ENCODE measurements at regions of chr16 and their contacts with region 1.

Region 1: DNA sequence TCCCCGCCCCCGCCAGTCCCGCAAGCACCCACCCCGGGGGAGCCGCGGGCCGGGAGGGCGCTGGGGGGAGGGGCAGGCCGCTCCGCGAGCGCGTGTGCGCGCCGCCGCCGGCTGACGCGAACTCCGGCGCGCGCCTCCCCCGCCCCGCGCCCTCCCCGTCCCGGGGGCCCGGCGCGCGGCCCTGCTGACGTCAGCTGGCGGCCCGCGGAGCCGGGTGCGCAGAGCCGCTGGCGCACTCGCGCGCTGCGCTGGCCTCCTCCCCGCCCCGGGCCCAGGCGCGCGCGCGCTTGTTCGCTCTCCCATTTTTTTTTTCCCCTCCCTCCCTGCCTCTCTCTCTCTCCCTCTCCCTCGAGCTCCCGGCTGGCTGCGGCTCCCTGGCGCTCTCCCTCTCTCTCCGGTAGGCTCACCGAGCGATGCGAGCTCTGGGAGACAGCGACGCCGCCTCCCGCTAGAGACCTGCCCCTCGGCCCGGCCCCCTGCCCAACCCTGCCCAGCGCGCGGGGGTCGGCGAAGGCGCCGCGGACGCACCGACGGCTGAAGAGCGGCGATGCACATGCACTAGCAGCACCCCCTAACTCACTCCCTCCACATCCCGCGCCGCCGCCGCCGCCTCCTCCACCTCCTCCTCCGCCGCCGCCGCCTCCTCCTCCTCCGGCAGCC is at the start of gene GNAO1:
- DNase-seq: peak; percentile 91
- H3K4me3 ChIP-seq: peak within 1 kb of the TSS; percentile 81 to 82 (median 81)
- H3K27ac ChIP-seq: peak within 1 kb of the TSS; percentile 76 to 99 (median 97)
- H3K4me1 ChIP-seq: peaks cover 0 to 49% (median 39%) of the 10 kb centered on the region in 4 donors
- H3K27me3 ChIP-seq: no peaks in the 10 kb centered on the region
- CTCF ChIP-seq: no peak
- EP300 ChIP-seq: no peak
- POLR2A ChIP-seq: no peak
- total RNA-seq, gene GNAO1: 28.8 to 67.0 (median 32.4) TPM

Region 2: GRCh38 chr16:55949518-55949917 is 241.8 kb before region 1 on chr16:
- intact Hi-C with region 1: loop called (anchors 5 kb)
- DNase-seq: no peak
- H3K4me3 ChIP-seq: no peak overlapping the region
- H3K27ac ChIP-seq: no peak overlapping the region
- H3K4me1 ChIP-seq: peaks cover 0 to 19% (median 3%) of the 10 kb centered on the region in 4 donors
- H3K27me3 ChIP-seq: no peaks in the 10 kb centered on the region
- CTCF ChIP-seq: no peak
- EP300 ChIP-seq: peak in 1 of 4 donors; percentile 10
- POLR2A ChIP-seq: no peak

Region 3: DNA sequence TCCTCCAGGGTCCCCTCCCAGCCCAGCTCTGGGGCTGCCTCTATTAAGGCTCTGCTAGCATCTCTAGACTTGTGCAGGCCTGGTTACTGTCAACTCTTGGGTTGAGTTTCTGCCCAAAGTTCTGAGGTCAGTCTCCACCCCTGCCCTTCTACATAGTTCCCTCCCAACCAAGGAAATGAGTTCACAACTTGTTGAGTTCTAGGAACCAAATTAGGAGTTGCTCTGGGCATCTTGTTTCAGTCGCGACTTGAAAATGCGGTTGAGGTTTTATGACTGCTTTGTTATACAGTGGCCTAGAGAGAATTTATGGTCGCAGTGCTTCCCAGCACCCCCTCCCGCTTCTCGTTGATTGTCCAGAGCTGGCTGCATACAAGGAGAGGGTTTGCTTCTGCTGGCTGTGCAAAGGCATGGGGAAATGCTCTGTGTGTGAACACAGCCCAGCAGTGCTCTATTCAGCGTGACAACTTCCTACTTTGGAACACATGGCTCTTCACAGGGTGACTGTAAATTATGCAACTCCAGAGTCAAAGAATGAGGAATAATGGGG is 20.2 kb after region 1 on chr16:
- intact Hi-C with region 1: loop called (anchors 2 kb)
- DNase-seq: peak; percentile 94
- H3K4me3 ChIP-seq: peak overlapping the region in 3 of 4 donors; percentile 0 to 28 (median 20)
- H3K27ac ChIP-seq: peak overlapping the region in 3 of 4 donors; percentile 72 to 86 (median 83)
- H3K4me1 ChIP-seq: peaks cover 0 to 73% (median 43%) of the 10 kb centered on the region in 4 donors
- H3K27me3 ChIP-seq: no peaks in the 10 kb centered on the region
- CTCF ChIP-seq: no peak
- EP300 ChIP-seq: peak; percentile 45 to 81 (median 78)
- POLR2A ChIP-seq: peak in 1 of 2 donors; percentile 26

Region 4: GRCh38 chr16:56257239-56257638 is 66.0 kb after region 1 on chr16:
- intact Hi-C with region 1: loop called (anchors 5 kb)
- DNase-seq: peak; percentile 97
- H3K4me3 ChIP-seq: no peak overlapping the region
- H3K27ac ChIP-seq: peak overlapping the region in 3 of 4 donors; percentile 82 to 91 (median 90)
- H3K4me1 ChIP-seq: peaks cover 5 to 100% (median 78%) of the 10 kb centered on the region in 4 donors
- H3K27me3 ChIP-seq: no peaks in the 10 kb centered on the region
- CTCF ChIP-seq: no peak
- EP300 ChIP-seq: peak in 1 of 4 donors; percentile 47
- POLR2A ChIP-seq: no peak

Region 5: DNA sequence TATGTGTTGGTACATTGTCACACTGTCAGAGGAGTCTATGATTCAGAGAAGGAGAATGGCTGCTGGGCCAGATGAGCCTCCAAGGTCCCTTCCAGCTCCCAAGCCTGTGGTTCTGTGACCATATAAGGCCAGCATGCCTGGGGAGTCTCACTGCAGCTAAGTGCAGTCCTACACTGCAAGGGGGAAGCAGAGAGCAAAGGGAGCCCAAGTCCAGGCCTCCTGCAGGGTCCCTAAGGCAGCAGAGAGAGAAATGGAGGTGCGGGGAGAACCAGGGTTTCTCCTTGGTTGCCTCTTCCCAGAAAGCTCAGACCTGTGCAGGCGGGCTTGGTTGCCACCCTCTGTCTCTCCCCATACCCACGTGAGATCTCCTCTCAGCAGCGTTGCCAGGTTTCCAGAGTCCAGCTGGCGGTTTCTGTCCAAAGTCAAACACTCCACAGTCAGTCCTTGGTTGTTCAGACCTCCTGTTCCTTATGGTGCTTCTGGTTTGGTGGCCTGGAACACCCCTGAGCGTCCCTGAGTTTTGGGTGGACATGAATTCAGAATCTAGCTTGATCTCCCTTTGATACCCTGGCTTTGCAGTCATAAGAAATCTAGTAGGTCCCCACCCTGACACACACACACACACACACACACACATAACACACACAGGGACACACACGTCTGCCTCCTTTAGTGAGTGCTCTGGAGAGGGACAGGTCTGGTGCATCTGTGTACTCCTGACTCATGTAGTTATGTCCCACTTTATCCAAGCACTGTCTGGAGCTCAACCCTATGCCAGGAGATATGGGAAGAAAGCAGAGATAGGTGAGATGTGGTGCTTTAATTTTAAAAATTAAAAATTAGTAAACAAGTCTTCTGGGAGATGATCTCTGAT is 78.8 kb after region 1 on chr16:
- intact Hi-C with region 1: loop called (anchors 2 kb)
- DNase-seq: peak; percentile 93
- H3K4me3 ChIP-seq: peak overlapping the region in 2 of 4 donors; percentile 45 to 46
- H3K27ac ChIP-seq: peak overlapping the region in 3 of 4 donors; percentile 90 to 92 (median 91)
- H3K4me1 ChIP-seq: peaks cover 6 to 48% (median 45%) of the 10 kb centered on the region in 4 donors
- H3K27me3 ChIP-seq: no peaks in the 10 kb centered on the region
- CTCF ChIP-seq: peak in 3 of 4 experiments; percentile 19 to 56 (median 26)
- EP300 ChIP-seq: peak in 1 of 4 donors; percentile 9
- POLR2A ChIP-seq: no peak

Region 6: DNA sequence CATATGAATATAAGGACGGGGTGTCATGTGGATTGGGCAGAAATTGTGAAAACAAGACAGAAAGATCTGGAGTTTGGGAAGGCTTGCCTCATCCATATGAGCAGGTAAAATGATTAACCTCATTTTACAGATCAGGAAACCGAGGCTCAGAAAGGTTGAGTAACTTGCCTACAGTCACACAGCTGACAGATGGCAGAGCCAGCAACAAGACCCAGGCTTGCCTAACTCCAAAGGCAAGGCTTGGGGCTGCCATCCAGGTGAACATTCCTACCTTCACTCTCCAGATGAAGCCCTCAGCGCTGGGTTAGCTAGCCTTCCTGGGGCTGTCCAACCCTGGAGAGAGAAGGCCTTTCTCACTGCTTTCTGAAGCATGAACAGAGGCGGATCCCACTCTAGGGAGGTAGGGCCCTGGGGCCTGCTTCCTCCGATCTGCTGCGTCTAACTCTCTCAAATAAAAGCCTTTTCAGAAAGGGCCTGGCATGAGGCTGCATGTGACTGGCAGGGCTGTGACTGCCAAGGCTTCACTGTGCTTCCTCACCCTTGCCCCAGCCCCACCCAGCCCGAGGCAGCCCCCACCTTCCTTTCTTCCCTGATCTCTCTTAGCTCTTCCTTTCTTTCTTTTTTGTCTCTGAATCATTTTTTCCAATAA is 107.8 kb after region 1 on chr16:
- intact Hi-C with region 1: loop called (anchors 5 kb)
- DNase-seq: peak; percentile 76
- H3K4me3 ChIP-seq: no peak overlapping the region
- H3K27ac ChIP-seq: peak overlapping the region in 3 of 4 donors; percentile 33 to 49 (median 46)
- H3K4me1 ChIP-seq: peaks cover 0 to 72% (median 54%) of the 10 kb centered on the region in 4 donors
- H3K27me3 ChIP-seq: no peaks in the 10 kb centered on the region
- CTCF ChIP-seq: no peak
- EP300 ChIP-seq: no peak
- POLR2A ChIP-seq: no peak

Region 7: DNA sequence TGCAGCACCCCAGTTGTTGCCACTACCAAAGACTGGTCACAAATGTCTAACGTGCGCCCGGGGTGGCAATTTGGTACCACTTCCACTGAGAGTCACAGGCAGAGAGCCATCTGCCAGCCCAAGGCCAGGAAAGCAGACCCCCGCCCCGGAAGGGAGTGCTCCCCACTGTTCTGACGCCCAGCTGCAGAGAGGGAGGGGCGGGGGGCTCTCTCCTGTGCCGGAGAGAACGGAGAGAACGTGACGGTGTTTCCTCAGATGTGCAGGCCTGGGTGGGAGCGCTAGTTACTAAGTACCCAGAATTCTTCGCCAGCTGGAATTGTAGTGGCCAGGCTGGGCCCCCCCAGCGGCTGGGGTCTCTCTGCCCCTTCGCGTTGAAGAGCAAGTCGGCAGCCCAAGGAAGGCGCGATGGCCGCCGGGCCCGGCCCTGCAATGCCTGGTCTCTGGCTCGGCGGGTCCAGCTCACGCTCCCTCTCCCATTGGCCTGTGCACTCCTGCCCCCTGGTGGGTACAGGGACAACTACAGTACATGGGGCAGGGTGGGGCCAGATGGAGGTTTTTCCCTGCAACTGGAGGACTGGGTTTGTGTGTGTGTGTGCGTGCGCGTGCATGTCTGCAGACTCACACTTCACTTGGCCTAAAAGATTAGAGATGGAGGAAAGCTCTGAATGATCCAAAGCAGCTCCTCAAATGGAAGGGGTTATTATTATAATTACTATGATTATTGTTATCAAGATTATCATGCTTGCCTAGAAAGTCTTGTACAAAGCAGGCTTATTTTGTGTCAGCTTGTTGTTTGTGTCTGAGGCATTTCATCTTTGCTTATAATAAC is 126.9 kb after region 1 on chr16:
- intact Hi-C with region 1: loop called (anchors 2 kb)
- DNase-seq: peak; percentile 92
- H3K4me3 ChIP-seq: peak overlapping the region; percentile 15 to 40 (median 32)
- H3K27ac ChIP-seq: peak overlapping the region in 3 of 4 donors; percentile 47 to 60 (median 47)
- H3K4me1 ChIP-seq: peaks cover 0 to 16% (median 8%) of the 10 kb centered on the region in 4 donors
- H3K27me3 ChIP-seq: no peaks in the 10 kb centered on the region
- CTCF ChIP-seq: peak; percentile 91 to 96 (median 94)
- EP300 ChIP-seq: no peak
- POLR2A ChIP-seq: no peak